ENCODE measurements at regions of chr1 and their contacts with region 1.

Region 1: DNA sequence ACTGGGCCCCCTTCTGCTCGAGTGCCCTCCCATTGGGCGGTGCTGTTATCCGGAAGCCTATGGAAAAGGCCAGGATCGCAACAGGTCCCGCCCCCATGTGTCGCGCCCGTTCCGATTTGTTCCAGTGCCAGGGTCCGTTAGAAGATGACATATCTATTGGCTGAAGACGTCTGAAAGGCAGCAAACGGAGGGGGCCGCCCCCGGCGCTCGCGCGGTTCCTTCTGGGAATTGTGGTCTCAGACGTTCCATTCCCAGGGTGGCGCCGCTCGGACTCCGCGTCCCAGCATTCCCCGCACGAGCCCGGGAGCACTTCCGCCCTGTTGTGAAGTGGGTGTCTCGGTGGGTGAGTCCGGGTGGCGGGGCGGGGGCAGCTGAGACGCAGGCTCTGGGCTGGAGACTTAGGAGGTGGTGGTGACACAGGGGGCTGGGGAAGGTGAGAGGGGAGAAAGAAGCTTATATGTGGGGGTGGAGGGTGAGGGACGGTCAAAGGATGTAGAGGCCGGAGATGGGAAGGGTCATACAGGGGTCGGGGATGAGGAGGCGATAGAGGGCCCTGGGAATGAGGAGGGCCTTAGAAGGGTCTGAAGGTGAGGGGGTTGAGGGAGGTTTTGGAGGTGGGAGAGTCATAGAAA is at the start of gene ZSCAN20:
- DNase-seq: peak; percentile 91
- CTCF ChIP-seq: no peak

Region 2: GRCh38 chr1:33455539-33456501 is 16.6 kb before region 1 on chr1:
- CTCF ChIA-PET with region 1: interaction called, 65 read pairs
- POLR2A ChIA-PET with region 1: no interaction called
- DNase-seq: peak; percentile 70
- CTCF ChIP-seq: peak; percentile 70

Region 3: GRCh38 chr1:33460947-33461629 is 11.4 kb before region 1 on chr1:
- CTCF ChIA-PET with region 1: interaction called, 65 read pairs
- POLR2A ChIA-PET with region 1: no interaction called
- DNase-seq: peak; percentile 73
- CTCF ChIP-seq: no peak